PC-9 (cell line): ENCODE measurements at regions of chr11 and their contacts with region 1.

Region 1: DNA sequence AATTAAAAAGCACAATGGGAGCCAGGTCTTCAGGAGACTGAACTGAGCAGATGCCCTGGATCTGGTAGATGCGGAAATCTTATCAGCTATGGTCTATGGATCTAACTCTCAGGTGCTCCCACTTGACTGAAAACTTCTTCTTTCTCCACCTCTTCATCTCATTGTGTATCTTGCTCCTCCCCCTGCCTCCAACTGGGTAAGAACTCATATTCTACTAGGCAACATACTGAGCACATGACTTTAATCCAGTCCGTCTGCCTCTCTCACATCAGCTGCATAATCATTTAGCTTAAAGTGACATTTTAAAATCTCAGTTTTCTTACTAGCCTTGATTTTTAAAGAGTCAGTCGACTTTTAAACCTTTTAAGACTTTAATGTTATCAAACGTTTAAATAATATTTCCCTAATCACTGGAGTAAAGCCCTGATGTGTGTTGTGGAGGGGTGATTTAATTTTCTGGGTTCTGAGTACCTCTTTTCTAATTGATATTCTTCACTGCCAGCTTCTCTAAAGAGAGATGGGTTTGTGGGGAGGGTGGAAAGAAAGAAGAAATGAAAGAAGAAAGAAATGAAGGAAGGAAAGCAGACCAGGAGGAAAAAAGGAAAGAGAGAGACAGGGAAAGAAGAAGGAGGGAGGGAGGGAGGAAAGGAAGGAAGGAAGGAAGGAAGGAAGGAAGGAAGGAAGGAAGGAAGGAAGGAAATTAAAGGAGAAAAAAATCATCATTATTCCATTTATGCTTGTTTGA is 592.8 kb upstream of the ARHGAP42 start:
- DNase-seq: no peak
- H3K4me3 ChIP-seq: no peak overlapping the region
- H3K27ac ChIP-seq: no peak overlapping the region
- H3K4me1 ChIP-seq: no peaks in the 10 kb centered on the region
- H3K27me3 ChIP-seq: no peaks in the 10 kb centered on the region
- CTCF ChIP-seq: no peak

Region 2: GRCh38 chr11:99934008-99934407 is 160.3 kb before region 1 on chr11:
- CTCF ChIA-PET with region 1: no interaction called
- POLR2A ChIA-PET with region 1: no interaction called
- intact Hi-C with region 1: no loop called
- DNase-seq: peak in 1 of 2 experiments; percentile 18
- H3K4me3 ChIP-seq: no peak overlapping the region
- H3K27ac ChIP-seq: no peak overlapping the region
- H3K4me1 ChIP-seq: no peaks in the 10 kb centered on the region
- H3K27me3 ChIP-seq: no peaks in the 10 kb centered on the region
- CTCF ChIP-seq: no peak

Region 3: DNA sequence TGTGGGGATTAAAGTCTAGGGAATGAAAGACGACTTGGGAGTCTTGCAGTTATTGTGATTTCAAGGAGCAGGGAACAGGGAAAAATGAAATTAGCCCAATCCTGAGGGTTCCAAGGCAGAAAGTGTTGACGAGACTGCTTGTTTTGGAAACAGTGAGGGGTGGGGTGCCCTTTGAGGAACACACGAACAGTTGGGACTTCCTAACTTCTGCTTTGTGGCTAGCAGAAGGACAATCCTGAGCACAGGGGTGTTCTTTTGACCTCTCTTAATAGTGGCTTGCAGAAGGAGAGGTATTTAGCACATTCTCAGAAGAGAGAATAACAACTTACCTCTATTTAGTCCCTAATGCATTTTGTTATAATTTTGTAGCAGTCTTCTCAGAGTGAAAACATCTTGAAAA is 46.9 kb after region 1 on chr11:
- CTCF ChIA-PET with region 1: no interaction called
- POLR2A ChIA-PET with region 1: no interaction called
- intact Hi-C with region 1: no loop called
- DNase-seq: no peak
- H3K4me3 ChIP-seq: no peak overlapping the region
- H3K27ac ChIP-seq: no peak overlapping the region
- H3K4me1 ChIP-seq: no peaks in the 10 kb centered on the region
- H3K27me3 ChIP-seq: no peaks in the 10 kb centered on the region
- CTCF ChIP-seq: no peak

Region 4: GRCh38 chr11:100800202-100800601 is 705.9 kb after region 1 on chr11:
- CTCF ChIA-PET with region 1: no interaction called
- POLR2A ChIA-PET with region 1: no interaction called
- intact Hi-C with region 1: loop called (anchors 5 kb)
- DNase-seq: no peak
- H3K4me3 ChIP-seq: no peak overlapping the region
- H3K27ac ChIP-seq: no peak overlapping the region
- H3K4me1 ChIP-seq: no peaks in the 10 kb centered on the region
- H3K27me3 ChIP-seq: no peaks in the 10 kb centered on the region
- CTCF ChIP-seq: no peak